Dorsolateral prefrontal cortex (tissue), 120 donors: ENCODE measurements at regions of chr14 and their contacts with region 1.

Region 1: DNA sequence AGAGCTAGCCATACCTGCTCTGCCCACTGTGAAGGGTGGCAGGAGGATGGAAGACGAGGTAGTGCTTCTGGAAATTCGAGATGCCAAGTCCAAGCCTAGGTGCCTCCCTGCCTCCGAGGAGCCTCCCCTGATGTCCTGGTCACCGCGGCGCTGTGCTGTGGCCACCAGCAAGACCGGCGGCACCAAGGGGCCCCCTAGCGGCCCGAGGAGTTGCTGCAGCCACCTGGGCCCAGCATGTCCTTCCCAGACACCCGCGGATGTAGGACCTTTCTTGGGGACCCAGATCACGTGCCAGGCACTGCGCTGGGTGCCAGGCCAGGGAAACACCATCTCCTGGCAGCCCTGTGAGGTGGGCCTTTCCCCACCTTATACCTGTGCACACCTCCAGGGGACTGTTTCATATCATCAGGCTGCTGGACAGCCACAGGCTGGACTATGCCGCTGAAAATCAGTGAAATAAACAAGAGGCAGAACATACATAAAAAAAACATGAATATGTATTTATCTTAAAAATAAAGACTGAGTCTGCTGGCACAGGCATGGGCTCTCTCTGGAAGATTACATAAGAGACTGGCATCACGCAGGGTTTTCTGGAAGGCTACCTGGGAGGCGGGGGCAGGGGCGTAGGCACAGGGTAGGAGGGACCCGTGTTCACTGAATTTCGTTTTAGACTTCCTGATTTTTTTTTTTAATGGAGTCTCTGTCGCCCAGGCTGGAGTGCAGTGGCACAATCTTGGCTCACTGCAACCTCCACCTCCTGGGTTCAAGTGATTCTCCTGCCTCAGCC is 15.9 kb upstream of the HHIPL1 start:
- DNase-seq: peak; percentile 77 to 89 (median 84)
- H3K4me3 ChIP-seq: peak overlapping the region in 2 of 59 donors; percentile 19 to 28
- H3K27ac ChIP-seq: peak overlapping the region in 13 of 59 donors; percentile 5 to 69 (median 43)
- H3K27me3 ChIP-seq: no peaks in the 10 kb centered on the region
- CTCF ChIP-seq: peak; percentile 64 to 100 (median 98)

Region 2: GRCh38 chr14:99518441-99519346 is 110.3 kb before region 1 on chr14:
- intact Hi-C with region 1: loop called (anchors 1 to 2 kb)
- DNase-seq: peak; percentile 51 to 85 (median 71)
- H3K4me3 ChIP-seq: no peak overlapping the region
- H3K27ac ChIP-seq: peak overlapping the region in 2 of 59 donors; percentile 31 to 45
- H3K27me3 ChIP-seq: no peaks in the 10 kb centered on the region
- CTCF ChIP-seq: peak; percentile 86 to 100 (median 98)

Region 3: GRCh38 chr14:99563233-99564129 is 65.5 kb before region 1 on chr14:
- intact Hi-C with region 1: loop called (anchors 5 kb)
- DNase-seq: peak; percentile 68 to 96 (median 78)
- H3K4me3 ChIP-seq: no peak overlapping the region
- H3K27ac ChIP-seq: peak overlapping the region in 30 of 59 donors; percentile 2 to 96 (median 40)
- H3K27me3 ChIP-seq: no peaks in the 10 kb centered on the region
- CTCF ChIP-seq: peak in 53 of 56 donors; percentile 29 to 73 (median 50)